ENCODE measurements at regions of chr5 and their contacts with region 1.

Region 1: GRCh38 chr5:150458819-150459557 is 9.4 kb upstream of the RPS14 start:
- DNase-seq: no peak
- H3K4me3 ChIP-seq: no peak overlapping the region; the same call in 1 of the 2 replicates
- H3K27me3 ChIP-seq: no peaks in the 10 kb centered on the region
- CTCF ChIP-seq: peak; percentile 85

Region 2: GRCh38 chr5:150227606-150228273 is 231.2 kb before region 1 on chr5:
- CTCF ChIA-PET with region 1: no interaction called
- POLR2A ChIA-PET with region 1: no interaction called
- DNase-seq: no peak
- H3K4me3 ChIP-seq: no peak overlapping the region
- H3K27me3 ChIP-seq: no peaks in the 10 kb centered on the region
- CTCF ChIP-seq: no peak

Region 3: DNA sequence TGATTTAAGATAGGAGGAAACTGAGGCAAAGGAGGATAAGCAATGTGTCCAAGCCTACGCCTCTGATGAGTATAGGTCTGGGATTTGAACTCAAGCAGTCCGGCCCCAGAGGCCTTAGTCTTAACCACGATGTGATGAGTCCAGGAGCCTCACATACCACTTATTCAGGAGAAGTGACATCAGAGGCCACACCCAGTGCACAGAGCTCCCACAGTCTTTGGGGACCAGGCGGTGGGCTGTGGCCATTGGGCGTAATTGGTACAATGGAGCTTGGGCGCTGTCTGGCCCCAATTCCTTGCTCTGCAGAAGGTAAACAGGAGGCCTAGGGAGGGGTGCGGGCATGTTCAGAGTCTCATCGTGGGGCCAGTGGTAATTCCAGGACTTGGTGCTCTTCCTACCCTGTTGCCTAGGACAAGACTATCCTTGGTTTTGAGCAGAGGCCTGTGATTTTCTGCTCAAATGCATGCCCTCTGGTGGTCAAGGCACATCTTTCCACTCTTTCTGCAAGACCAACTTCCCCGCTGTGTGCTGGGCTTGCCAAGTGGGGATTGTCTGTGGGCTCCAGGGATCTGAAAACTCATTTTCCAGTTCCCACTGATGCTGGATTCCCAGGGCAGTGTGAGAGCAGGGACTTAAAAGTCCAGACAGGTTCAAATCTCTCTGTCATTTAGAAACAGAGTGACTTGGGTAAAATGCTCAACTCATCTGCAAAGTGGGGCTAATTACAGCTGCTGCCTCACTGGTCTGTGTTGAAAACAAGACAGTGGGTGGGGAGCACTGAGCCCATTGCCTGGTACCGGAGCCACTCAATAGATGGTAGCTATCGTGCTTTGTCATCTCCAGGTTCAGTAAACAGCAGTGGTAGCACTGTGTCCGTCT is 64.7 kb after region 1 on chr5:
- CTCF ChIA-PET with region 1: interaction called, 19 read pairs
- POLR2A ChIA-PET with region 1: no interaction called
- DNase-seq: no peak
- H3K4me3 ChIP-seq: no peak overlapping the region
- H3K27me3 ChIP-seq: no peaks in the 10 kb centered on the region
- CTCF ChIP-seq: peak; percentile 74

Region 4: DNA sequence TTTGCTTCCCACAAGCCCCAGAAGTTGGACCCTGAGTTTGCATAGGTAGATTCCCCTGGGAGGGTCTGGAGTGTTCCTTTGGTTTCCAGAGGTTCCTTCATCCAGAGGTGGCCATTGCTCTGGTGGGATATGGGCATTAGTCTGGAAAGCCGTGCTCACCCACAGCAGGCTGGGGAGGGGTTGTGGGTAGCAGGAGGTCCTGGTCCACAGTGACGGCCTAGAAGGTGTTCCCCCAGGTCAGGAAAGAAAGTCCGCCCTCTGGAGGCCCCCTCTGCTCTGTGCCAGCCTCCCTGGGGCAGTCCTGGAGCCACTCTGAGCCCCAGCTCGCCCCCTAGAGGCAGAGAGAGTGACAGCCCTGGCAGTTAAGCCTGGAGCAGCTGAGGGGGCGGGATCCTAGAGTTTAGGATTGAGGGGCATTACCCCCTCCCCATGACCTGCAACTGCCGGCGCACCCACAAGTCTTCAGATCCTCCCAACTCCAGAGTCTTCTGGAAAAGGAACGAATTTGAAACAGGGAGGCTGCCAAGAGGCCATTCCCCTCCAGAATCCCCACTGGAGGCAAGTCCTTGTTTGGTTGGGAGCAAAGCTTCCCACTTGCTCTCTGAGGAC is 85.7 kb after region 1 on chr5:
- CTCF ChIA-PET with region 1: interaction called, 34 read pairs
- POLR2A ChIA-PET with region 1: no interaction called
- DNase-seq: no peak
- H3K4me3 ChIP-seq: no peak overlapping the region
- H3K27me3 ChIP-seq: no peaks in the 10 kb centered on the region
- CTCF ChIP-seq: peak; percentile 87

Region 5: DNA sequence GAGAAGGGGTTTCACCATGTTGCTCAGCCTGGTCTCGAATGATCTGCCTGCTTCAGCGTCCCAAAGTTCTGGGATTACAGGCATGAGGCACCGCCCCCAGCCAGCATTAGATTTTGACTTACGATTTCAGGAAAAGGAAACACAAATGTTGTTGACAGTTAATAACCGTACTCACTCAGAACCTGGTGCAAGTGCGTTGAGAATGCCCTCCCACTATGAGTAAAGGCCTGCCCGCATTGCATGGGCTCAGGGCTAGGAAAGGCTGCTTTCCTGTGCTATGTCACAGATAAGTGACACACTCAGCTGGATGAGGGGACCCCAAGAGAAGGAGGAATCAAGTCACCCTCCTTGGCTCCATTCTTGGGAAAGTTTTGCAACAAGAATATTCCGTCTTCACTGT is 91.3 kb after region 1 on chr5:
- CTCF ChIA-PET with region 1: interaction called, 34 read pairs
- POLR2A ChIA-PET with region 1: no interaction called
- DNase-seq: no peak
- H3K4me3 ChIP-seq: no peak overlapping the region
- H3K27me3 ChIP-seq: no peaks in the 10 kb centered on the region
- CTCF ChIP-seq: no peak

Region 6: DNA sequence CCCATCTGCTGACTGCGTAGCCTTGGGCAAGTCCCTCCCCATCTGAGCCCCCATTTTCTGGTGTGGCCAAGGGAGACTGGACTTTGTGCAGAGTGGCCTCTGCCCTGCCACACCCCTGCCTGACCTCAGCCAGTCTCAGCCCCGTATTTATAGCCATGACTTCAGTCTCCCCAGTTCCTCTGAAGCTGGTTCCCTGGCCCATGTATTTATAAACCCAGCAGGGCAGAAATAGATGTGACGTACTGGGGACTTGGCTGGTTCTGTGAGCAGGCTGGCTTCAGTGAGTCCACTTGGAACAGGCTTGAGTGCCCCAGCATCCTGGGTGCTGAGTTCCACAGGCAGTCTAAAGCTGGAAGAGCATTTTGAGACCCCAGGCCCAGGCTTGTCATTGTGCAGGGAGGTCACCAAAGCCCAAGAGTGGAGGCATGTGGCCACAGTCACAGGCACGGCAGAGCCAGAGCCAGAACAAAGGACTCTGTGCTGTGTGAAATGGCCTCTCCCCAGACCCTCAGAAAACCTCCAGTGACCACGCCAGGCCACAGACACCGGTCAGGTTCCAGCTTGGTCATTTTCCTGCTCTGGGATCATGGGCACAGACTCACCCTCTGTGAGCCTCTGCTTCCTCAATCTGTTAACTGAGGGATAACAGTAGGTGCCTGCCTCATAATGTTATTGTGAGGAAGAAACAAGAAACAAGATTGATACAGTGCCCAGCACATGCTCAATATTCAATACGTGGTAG is 151.0 kb after region 1 on chr5:
- CTCF ChIA-PET with region 1: no interaction called
- POLR2A ChIA-PET with region 1: no interaction called
- DNase-seq: no peak
- H3K4me3 ChIP-seq: no peak overlapping the region
- H3K27me3 ChIP-seq: no peaks in the 10 kb centered on the region; the same call in none of the 2 replicates
- CTCF ChIP-seq: no peak